ENCODE measurements at regions of chr7 and their contacts with region 1.

Region 1: GRCh38 chr7:103317016-103317415 is 19.8 kb downstream of the PMPCB start:
- DNase-seq: no peak
- H3K4me3 ChIP-seq: no peak overlapping the region
- H3K27ac ChIP-seq: no peak overlapping the region
- H3K4me1 ChIP-seq: no peaks in the 10 kb centered on the region
- H3K27me3 ChIP-seq: no peaks in the 10 kb centered on the region
- CTCF ChIP-seq: no peak

Region 2: GRCh38 chr7:102908676-102909075 is 408.3 kb before region 1 on chr7:
- CTCF ChIA-PET with region 1: no interaction called
- POLR2A ChIA-PET with region 1: interaction called, 11 read pairs
- intact Hi-C with region 1: no loop called
- DNase-seq: no peak
- H3K4me3 ChIP-seq: no peak overlapping the region
- H3K27ac ChIP-seq: no peak overlapping the region
- H3K4me1 ChIP-seq: no peaks in the 10 kb centered on the region
- H3K27me3 ChIP-seq: no peaks in the 10 kb centered on the region
- CTCF ChIP-seq: no peak

Region 3: GRCh38 chr7:103349805-103350204 is 32.8 kb after region 1 on chr7:
- CTCF ChIA-PET with region 1: no interaction called
- POLR2A ChIA-PET with region 1: no interaction called
- intact Hi-C with region 1: loop called (anchors 5 kb)
- DNase-seq: no peak
- H3K4me3 ChIP-seq: no peak overlapping the region; the same call in 1 of the 2 replicates
- H3K27ac ChIP-seq: no peak overlapping the region
- H3K4me1 ChIP-seq: peaks cover 32% of the 10 kb centered on the region
- H3K27me3 ChIP-seq: no peaks in the 10 kb centered on the region
- CTCF ChIP-seq: no peak

Region 4: GRCh38 chr7:103369430-103369829 is 52.4 kb after region 1 on chr7:
- CTCF ChIA-PET with region 1: no interaction called
- POLR2A ChIA-PET with region 1: no interaction called
- intact Hi-C with region 1: loop called (anchors 5 kb)
- DNase-seq: no peak
- H3K4me3 ChIP-seq: no peak overlapping the region
- H3K27ac ChIP-seq: no peak overlapping the region
- H3K4me1 ChIP-seq: no peaks in the 10 kb centered on the region
- H3K27me3 ChIP-seq: no peaks in the 10 kb centered on the region
- CTCF ChIP-seq: no peak

Region 5: GRCh38 chr7:103387242-103387641 is 70.2 kb after region 1 on chr7:
- CTCF ChIA-PET with region 1: no interaction called
- POLR2A ChIA-PET with region 1: no interaction called
- intact Hi-C with region 1: no loop called
- DNase-seq: no peak
- H3K4me3 ChIP-seq: no peak overlapping the region
- H3K27ac ChIP-seq: no peak overlapping the region
- H3K4me1 ChIP-seq: no peaks in the 10 kb centered on the region
- H3K27me3 ChIP-seq: peaks cover 17% of the 10 kb centered on the region; the same call in 1 of the 2 replicates
- CTCF ChIP-seq: no peak

Measured in PC-9 (cell line).